ENCODE measurements at regions of chrX and their contacts with region 1.

Region 1: DNA sequence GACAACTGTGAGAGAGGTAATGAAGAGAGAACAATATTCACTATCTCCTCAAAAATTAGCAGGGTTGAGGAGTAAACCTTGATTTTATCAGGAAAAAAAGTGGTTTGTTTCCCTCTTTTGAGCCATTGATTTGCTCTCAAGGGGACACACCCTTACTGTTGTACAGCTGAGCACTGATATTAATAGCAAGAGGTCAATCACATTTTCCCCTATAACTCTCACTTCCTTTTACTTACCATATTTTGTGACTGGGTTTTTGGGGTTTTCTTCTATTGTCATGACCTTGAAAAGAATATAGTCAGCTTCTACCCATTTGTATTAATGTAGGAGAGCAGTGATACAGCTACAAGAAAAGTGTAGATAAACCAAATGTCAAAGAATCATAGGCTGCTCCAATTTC is 70.2 kb upstream of the LONRF3 start:
- DNase-seq: no peak
- H3K4me3 ChIP-seq: no peak overlapping the region
- H3K27ac ChIP-seq: no peak overlapping the region
- H3K4me1 ChIP-seq: no peaks in the 10 kb centered on the region
- H3K27me3 ChIP-seq: no peaks in the 10 kb centered on the region
- CTCF ChIP-seq: no peak

Region 2: DNA sequence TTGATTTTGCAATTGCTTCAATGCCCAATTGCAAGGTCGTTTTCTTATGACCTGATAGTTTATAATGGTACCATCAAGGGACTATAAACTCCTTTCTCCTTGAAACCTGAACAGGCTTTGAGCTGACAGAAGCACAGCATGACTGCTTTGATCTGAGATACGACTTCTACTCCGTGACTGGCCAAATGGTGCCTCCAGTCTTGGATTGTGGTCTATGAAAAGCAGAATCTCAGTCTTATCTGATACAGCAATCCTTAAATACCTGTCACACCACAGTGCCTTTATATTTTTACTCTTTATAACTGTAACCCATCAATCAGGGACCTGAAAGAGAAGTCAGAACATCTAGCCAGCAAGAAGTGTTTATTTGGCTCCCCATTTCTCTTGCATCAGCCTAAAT is 315.5 kb before region 1 on chrX:
- CTCF ChIA-PET with region 1: no interaction called
- dilution Hi-C with region 1: no loop called
- in situ Hi-C with region 1: no loop called
- intact Hi-C with region 1: no loop called
- DNase-seq: no peak
- H3K4me3 ChIP-seq: no peak overlapping the region
- H3K27ac ChIP-seq: no peak overlapping the region
- H3K4me1 ChIP-seq: no peaks in the 10 kb centered on the region
- H3K27me3 ChIP-seq: no peaks in the 10 kb centered on the region
- CTCF ChIP-seq: no peak

Region 3: DNA sequence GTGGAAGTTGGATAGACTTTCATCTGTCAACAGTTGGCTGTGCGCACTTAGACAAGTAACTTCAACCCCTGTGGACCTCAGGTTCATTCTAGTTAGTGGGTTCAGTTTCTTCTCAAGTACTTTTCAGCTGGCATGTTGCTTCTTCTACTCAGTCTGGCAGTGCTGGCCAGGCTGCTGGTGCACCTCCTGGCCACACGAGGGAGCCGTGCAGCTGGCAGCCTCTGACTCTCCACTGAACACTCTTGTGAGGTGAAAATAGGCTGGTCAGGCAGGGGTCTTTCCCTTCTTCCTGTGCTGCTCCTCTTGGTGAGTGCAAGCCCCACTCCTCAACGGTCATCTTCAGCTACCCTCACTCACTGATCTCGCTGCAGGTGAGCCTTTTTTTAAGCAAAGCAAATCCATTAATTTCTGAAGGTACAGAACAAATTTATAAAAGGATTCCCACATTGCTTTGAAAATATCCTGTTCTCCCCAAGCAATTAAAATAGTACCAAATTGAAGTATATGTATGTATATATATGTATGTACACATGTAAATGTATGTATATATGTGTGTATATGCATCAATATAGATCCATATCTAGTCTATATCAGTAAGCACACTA is 100.8 kb after region 1 on chrX:
- CTCF ChIA-PET with region 1: no interaction called
- dilution Hi-C with region 1: loop called (anchors 5 kb)
- in situ Hi-C with region 1: no loop called
- intact Hi-C with region 1: no loop called
- DNase-seq: peak; percentile 14
- H3K4me3 ChIP-seq: no peak overlapping the region
- H3K27ac ChIP-seq: no peak overlapping the region
- H3K4me1 ChIP-seq: no peaks in the 10 kb centered on the region
- H3K27me3 ChIP-seq: no peaks in the 10 kb centered on the region
- CTCF ChIP-seq: peak; percentile 94 to 97

Measured in mammary epithelial cell (primary cell).